ENCODE measurements at regions of chr1 and their contacts with region 1.

Region 1: DNA sequence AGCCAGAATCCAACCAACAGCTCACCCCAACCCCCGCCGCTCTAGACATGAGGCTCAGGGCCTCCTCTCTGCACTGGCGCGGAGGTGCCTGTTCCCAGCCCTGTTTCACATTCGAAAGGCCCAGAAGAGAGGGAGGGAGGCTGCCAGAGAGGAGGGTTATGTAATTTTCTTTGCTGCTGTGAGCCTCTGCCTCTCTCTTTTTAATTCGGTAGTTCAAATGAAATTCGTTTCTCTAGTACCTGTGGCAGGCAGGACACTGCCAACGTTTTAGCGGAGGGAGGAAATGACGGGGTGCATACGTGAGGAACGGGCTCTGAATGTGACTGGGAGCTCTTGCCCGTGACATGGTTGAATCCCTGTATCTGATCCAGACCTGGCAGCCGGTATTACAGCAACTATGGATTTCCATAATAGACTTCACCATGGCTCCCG is 9.4 kb downstream of the PRDM16 start:
- DNase-seq: peak in 1 of 5 donors; percentile 56
- ATAC-seq: peak; percentile 16 to 51 (median 33)
- H3K4me3 ChIP-seq: no peak overlapping the region
- H3K27ac ChIP-seq: peak overlapping the region in 11 of 12 donors; percentile 13 to 82 (median 61)
- H3K4me1 ChIP-seq: peaks cover 0 to 80% (median 27%) of the 10 kb centered on the region in 12 donors
- H3K27me3 ChIP-seq: peaks cover 0 to 27% (median 4%) of the 10 kb centered on the region in 9 donors
- CTCF ChIP-seq: no peak
- POLR2A ChIP-seq: no peak

Region 2: GRCh38 chr1:2985067-2985561 is 93.3 kb before region 1 on chr1:
- intact Hi-C with region 1: no loop called
- DNase-seq: peak in 2 of 5 donors; percentile 13 to 52
- ATAC-seq: no peak
- H3K4me3 ChIP-seq: no peak overlapping the region
- H3K27ac ChIP-seq: no peak overlapping the region
- H3K4me1 ChIP-seq: peaks cover 0 to 6% (median 0%) of the 10 kb centered on the region in 12 donors
- H3K27me3 ChIP-seq: peaks cover 0 to 5% (median 0%) of the 10 kb centered on the region in 9 donors
- CTCF ChIP-seq: no peak
- POLR2A ChIP-seq: no peak

Region 3: DNA sequence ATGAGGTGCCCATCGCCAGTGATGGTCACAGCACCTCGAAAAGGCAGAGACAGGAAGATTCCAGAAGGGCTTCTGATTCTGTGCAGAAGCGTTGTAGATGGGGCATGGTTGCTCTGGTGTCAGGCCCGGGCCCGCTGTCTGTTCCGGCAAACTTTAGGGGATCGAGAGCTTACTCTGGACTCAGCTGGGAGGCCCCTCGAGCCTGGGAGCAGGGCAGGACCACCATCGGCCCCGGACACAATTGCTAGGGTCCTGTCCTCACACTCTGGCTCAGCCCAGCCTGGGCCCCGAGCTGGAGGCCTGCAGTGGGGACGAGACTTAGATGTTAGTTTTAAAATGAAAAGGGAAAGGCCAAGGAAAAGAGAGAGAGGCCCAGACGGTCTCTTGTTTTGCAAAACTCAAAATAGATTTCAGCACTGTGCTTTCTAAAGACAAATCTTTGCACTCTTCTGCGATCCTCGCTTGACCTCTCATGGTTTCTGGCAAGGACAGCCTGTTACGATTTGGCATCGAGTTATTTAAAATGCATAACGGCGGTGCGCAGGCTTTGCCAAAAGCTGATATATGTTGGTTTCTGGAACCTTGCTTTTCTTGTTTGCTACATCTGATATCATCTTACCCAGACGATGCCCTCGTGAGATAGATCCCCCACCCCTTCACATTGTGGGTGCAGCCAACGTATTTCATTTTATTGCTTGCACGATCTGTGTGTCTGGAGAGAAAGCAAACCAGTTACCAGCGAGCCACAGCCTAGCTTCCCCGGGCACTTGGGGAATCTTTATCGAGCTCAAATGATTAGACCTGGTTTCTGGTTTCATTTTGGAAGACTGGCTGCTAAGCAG is 48.5 kb after region 1 on chr1:
- intact Hi-C with region 1: loop called in 4 of 10 experiments (anchors 5 to 10 kb)
- DNase-seq: no peak
- ATAC-seq: peak; percentile 14 to 46 (median 36)
- H3K4me3 ChIP-seq: peak overlapping the region in 3 of 12 donors; percentile 6 to 21 (median 14)
- H3K27ac ChIP-seq: peak overlapping the region; percentile 55 to 89 (median 74)
- H3K4me1 ChIP-seq: peaks cover 6 to 84% (median 46%) of the 10 kb centered on the region in 12 donors
- H3K27me3 ChIP-seq: no peaks in the 10 kb centered on the region
- CTCF ChIP-seq: no peak
- POLR2A ChIP-seq: no peak

Region 4: DNA sequence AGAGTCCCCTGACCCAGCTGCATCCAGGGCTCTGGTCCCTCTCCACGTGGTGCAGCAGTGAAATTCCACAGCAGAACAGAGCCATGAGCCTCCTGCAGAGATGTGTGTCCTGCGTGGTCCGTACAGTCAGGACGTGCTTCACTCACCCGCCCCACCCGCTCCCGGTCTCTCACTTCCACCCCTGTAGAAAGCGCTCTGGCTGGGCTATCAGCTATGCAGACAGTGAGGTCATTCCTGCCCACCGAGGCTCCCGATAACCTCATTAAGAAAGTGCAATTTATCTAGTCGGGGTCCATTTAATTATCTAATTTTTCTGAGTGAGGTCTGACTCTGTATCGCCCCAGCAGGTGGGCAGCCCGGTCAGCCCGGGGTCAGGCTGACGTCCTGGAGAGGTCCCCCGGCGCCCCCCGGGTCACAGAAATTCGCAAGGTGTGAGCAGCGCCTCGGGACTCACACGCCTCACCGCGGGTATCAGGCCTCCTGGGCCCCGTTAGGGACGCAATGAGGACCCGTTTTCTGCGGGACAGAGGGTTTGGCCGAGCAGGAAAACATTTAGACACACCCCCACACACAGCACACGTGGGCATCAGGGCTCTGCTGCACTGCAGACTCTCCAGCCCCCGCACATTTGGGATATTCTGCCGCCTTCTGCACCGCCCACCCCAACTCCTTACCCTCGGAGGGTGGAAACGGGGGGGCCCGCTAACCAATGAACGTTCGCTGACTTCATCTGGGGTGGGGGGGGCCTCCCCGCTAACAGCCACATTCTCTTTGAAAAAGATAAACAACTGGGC is 67.3 kb after region 1 on chr1:
- intact Hi-C with region 1: no loop called
- DNase-seq: no peak
- ATAC-seq: peak in 2 of 4 donors; percentile 5 to 26
- H3K4me3 ChIP-seq: no peak overlapping the region
- H3K27ac ChIP-seq: no peak overlapping the region
- H3K4me1 ChIP-seq: peaks cover 0 to 29% (median 7%) of the 10 kb centered on the region in 12 donors
- H3K27me3 ChIP-seq: peaks cover 0 to 8% (median 0%) of the 10 kb centered on the region in 9 donors
- CTCF ChIP-seq: no peak
- POLR2A ChIP-seq: no peak

Measured in heart left ventricle (tissue), 16 donors.